SK-N-SH (cell line): ENCODE measurements at regions of chr5 and their contacts with region 1.

Region 1: GRCh38 chr5:99116526-99116925 is 187.7 kb upstream of the CHD1 start:
- DNase-seq: no peak
- H3K4me3 ChIP-seq: no peak overlapping the region
- H3K27ac ChIP-seq: no peak overlapping the region
- H3K4me1 ChIP-seq: no peaks in the 10 kb centered on the region
- H3K27me3 ChIP-seq: no peaks in the 10 kb centered on the region
- CTCF ChIP-seq: no peak
- EP300 ChIP-seq: no peak
- RAD21 ChIP-seq: no peak

Region 2: GRCh38 chr5:99032234-99033013 is 84.1 kb before region 1 on chr5:
- CTCF ChIA-PET with region 1: no interaction called
- POLR2A ChIA-PET with region 1: no interaction called
- DNase-seq: peak; percentile 46
- H3K4me3 ChIP-seq: no peak overlapping the region; a peak in 1 of 4 replicates
- H3K27ac ChIP-seq: no peak overlapping the region
- H3K4me1 ChIP-seq: 0 out of 4 replicates have a peak, but pooled peaks cover 0 to 5% of the 10 kb centered on the region in 2 experiments
- H3K27me3 ChIP-seq: no peaks in the 10 kb centered on the region
- CTCF ChIP-seq: peak; percentile 91
- EP300 ChIP-seq: no peak
- RAD21 ChIP-seq: peak; percentile 94

Region 3: DNA sequence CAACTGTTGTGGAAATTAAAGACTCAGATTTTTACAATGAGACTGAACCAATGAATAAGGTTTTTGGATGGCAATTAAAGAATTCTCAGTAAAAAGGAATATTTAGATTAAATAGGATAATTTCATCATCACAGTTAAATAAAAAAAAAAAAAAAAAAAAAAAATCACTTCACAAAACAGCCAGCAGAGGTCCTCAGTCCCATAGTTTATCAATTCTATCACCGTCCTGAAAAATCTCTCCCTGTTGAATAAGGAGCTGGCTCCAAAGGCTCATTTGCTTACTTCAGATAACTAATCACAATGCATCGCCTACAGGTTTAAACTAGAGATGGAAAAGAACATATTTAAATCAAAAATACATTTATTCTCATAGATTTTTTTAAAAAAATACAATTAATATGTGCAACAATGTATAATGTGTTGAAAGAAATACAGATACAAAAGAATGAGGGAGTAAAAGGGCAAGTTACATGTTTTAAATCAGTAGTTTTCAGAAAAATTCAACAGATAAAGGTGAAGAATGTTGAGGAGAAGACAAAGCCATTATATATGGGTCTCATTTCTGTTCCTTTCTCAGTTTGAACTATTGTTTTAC is 11.9 kb before region 1 on chr5:
- CTCF ChIA-PET with region 1: interaction called, 10 read pairs
- POLR2A ChIA-PET with region 1: no interaction called
- DNase-seq: peak; percentile 31
- H3K4me3 ChIP-seq: no peak overlapping the region
- H3K27ac ChIP-seq: no peak overlapping the region
- H3K4me1 ChIP-seq: no peaks in the 10 kb centered on the region; a peak in 1 of 4 replicates
- H3K27me3 ChIP-seq: no peaks in the 10 kb centered on the region; the same call in 1 of the 2 replicates
- CTCF ChIP-seq: peak; percentile 69
- EP300 ChIP-seq: no peak
- RAD21 ChIP-seq: peak; percentile 77